KBM-7 (cell line): ENCODE measurements at regions of chr2 and their contacts with region 1.

Region 1: GRCh38 chr2:191521608-191522208 is 156.2 kb upstream of the NABP1 start:
- DNase-seq: peak; percentile 47

Region 2: GRCh38 chr2:191178806-191179514 is 342.7 kb before region 1 on chr2:
- in situ Hi-C with region 1: loop called (anchors 25 kb)
- DNase-seq: no peak